ENCODE measurements at regions of chr12 and their contacts with region 1.

Region 1: GRCh38 chr12:779745-780734 is 27.7 kb downstream of the WNK1 start:
- DNase-seq: peak; percentile 79
- H3K4me3 ChIP-seq: peak overlapping the region in 2 of 3 experiments; percentile 17 to 62
- H3K27ac ChIP-seq: peak overlapping the region; percentile 72
- H3K4me1 ChIP-seq: peaks cover 23% of the 10 kb centered on the region
- H3K27me3 ChIP-seq: no peaks in the 10 kb centered on the region
- CTCF ChIP-seq: no peak
- POLR2A ChIP-seq: no peak

Region 2: GRCh38 chr12:795305-795704 is 15.3 kb after region 1 on chr12:
- CTCF ChIA-PET with region 1: interaction called, 14 read pairs
- POLR2A ChIA-PET with region 1: no interaction called
- dilution Hi-C with region 1: no loop called
- intact Hi-C with region 1: loop called (anchors 2 kb)
- DNase-seq: peak; percentile 64
- H3K4me3 ChIP-seq: no peak overlapping the region
- H3K27ac ChIP-seq: no peak overlapping the region
- H3K4me1 ChIP-seq: peaks cover 34% of the 10 kb centered on the region
- H3K27me3 ChIP-seq: no peaks in the 10 kb centered on the region
- CTCF ChIP-seq: no peak
- POLR2A ChIP-seq: no peak

Region 3: GRCh38 chr12:810671-811415 is 30.8 kb after region 1 on chr12:
- CTCF ChIA-PET with region 1: interaction called, 14 read pairs
- POLR2A ChIA-PET with region 1: interaction called, 5 read pairs
- dilution Hi-C with region 1: no loop called
- intact Hi-C with region 1: no loop called
- DNase-seq: no peak
- H3K4me3 ChIP-seq: no peak overlapping the region
- H3K27ac ChIP-seq: no peak overlapping the region
- H3K4me1 ChIP-seq: peaks cover 13% of the 10 kb centered on the region
- H3K27me3 ChIP-seq: no peaks in the 10 kb centered on the region
- CTCF ChIP-seq: no peak
- POLR2A ChIP-seq: no peak

Measured in endothelial cell of umbilical vein (primary cell).